G401 (cell line): ENCODE measurements at regions of chr10 and their contacts with region 1.

Region 1: DNA sequence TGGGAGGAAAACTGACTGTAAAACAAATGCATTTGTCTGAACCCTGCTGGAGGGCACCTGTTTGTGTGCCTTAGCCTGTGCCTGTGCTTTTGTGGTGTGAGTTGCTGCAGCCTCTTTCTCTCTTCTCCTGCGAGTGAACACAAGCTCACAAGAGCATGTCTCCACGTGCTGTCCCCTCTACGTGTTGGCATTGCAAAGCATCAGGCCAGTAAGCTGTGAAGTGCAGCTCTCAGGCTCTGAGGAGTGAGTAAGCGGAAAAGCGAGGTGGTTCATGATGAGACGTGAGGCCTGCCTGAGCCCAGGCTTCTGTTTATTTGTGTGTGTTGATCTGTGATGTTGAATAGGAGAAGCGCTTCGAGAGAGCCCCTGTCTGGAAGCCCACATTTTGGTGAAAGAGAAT is 85.6 kb upstream of the PDCD4 start:
- DNase-seq: no peak

Region 2: DNA sequence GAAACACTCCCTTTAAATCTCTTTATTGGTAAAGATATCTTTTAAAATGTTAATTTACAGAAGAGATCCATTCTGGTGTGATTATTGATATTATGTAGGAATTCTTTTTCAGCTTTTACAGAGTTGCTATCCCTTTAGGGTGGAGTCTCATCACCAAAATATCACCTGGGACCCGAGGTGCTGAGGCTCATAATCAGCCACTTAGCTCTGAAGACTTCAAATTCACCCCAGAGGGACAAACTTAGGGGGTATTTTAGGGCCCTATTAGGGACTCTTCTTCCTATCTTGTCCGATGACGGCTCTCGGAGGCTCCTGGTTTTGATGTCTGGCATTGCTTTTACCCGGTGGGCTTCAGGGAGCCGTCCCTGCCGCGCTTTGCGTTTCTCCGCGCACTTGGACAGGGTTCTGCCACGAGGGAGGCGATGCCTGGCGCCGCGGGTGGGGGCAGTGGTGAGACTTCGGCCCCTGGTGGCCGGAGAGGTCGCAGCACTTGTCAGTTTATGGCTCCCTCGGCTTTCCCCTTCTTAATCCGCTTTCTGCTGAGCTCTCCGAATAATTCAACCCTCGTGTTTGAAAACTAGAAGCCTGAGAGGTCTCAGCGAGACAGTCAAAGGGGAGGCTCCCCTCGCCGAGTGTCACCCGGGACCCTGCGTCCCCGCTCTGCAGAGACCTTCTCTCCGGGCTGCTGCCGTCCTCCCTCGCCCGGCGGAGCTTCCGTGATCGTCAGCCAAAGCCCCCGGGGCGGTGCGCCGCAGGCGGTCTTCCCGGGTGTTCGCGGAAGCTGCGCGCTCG is 114.2 kb before region 1 on chr10:
- in situ Hi-C with region 1: no loop called
- DNase-seq: peak; percentile 30

Region 3: DNA sequence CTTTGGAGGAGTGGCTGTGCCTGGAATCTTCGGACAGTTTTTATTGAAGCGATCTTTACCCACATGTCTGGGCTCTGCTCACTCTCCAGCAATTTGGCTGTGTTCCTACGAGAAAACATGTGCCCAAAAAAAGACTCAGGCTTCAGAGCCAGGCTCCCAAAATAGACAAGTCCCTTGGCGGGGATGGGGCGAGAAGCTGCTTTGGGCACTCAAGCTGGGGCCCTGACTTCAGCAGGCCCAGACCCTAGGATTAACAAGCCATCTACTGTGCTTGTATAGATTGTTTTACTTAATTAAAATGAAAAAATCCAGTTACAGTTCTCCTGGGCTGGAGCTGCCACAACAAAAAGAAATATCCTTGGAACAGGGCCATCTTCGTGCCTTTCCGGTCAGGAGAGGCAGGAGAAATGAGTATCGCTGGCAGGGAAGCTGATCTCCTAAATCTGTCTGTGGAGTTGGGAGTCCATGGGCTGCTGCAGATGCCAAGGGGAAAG is 34.2 kb after region 1 on chr10:
- in situ Hi-C with region 1: loop called (anchors 5 kb)
- DNase-seq: peak; percentile 98